Motor neuron (in vitro differentiated cells): ENCODE measurements at regions of chr1 and their contacts with region 1.

Region 1: GRCh38 chr1:246002725-246003441 is 504.2 kb downstream of the SMYD3 start:
- ATAC-seq: peak; percentile 62 to 94 (median 90)
- H3K4me3 ChIP-seq: no peak overlapping the region
- H3K27ac ChIP-seq: no peak overlapping the region
- H3K4me1 ChIP-seq: peaks cover 0 to 2% of the 10 kb centered on the region in 2 donors

Region 2: GRCh38 chr1:245156081-245156735 is 846.7 kb before region 1 on chr1:
- in situ Hi-C with region 1: loop called (anchors 5 to 25 kb)
- ATAC-seq: peak; percentile 65 to 88 (median 70)
- H3K4me3 ChIP-seq: peak overlapping the region; percentile 60 to 75 (median 68)
- H3K27ac ChIP-seq: peak overlapping the region; percentile 42 to 69
- H3K4me1 ChIP-seq: peaks cover 0 to 5% of the 10 kb centered on the region in 2 donors

Region 3: GRCh38 chr1:245528258-245528635 is 474.6 kb before region 1 on chr1:
- in situ Hi-C with region 1: no loop called
- ATAC-seq: no peak
- H3K4me3 ChIP-seq: no peak overlapping the region
- H3K27ac ChIP-seq: no peak overlapping the region
- H3K4me1 ChIP-seq: peaks cover 11 to 19% of the 10 kb centered on the region in 2 donors

Region 4: DNA sequence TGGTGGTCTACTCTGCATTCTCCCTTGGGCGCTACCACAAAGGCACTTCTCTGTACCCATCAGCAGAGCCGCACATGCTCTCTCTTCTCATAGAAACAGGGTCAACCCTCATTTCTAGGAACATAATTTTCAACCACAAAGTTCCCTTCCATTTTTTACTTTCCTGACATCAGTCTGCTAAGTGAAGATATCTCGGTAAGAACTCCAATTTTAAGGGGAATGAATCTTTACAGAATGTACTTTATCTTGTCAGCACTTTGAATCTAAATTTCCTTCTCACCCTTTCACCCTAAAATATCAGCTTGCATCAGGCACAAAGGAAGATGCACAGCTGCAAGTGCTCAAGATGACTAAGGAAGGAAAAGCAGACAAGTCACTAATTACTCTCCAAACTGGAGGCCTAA is 41.7 kb before region 1 on chr1:
- in situ Hi-C with region 1: no loop called
- ATAC-seq: no peak
- H3K4me3 ChIP-seq: no peak overlapping the region
- H3K27ac ChIP-seq: no peak overlapping the region
- H3K4me1 ChIP-seq: peaks cover 6 to 7% of the 10 kb centered on the region in 2 donors

Region 5: DNA sequence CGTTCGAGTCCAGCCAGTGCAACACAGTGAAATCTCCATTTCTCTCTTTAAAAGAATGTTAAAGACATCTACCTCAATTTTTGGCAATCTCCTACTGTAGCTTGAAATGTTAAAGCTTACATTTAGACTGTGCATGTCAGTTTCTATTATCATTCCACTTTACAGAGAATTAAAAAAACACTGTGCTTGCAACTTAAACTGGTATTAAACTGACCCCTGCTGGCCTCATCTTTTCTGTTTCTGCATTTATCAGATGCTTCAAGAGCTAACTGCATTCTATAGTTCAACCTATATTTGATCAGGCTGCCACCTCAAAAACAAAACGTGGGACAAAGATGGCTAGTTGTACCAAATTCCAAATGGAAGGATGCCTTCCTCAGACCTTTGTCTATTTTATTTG is 277.7 kb after region 1 on chr1:
- in situ Hi-C with region 1: loop called in 3 of 9 experiments (anchors 25 kb)
- ATAC-seq: peak in 7 of 8 experiments; percentile 22 to 63 (median 47)
- H3K4me3 ChIP-seq: no peak overlapping the region
- H3K27ac ChIP-seq: no peak overlapping the region
- H3K4me1 ChIP-seq: peaks cover 6 to 11% of the 10 kb centered on the region in 2 donors

Region 6: GRCh38 chr1:246428542-246429308 is 425.8 kb after region 1 on chr1:
- in situ Hi-C with region 1: loop called in 2 of 9 experiments (anchors 25 kb)
- ATAC-seq: peak in 2 of 8 experiments; percentile 31 to 86
- H3K4me3 ChIP-seq: no peak overlapping the region
- H3K27ac ChIP-seq: no peak overlapping the region
- H3K4me1 ChIP-seq: no peaks in the 10 kb centered on the region

Region 7: GRCh38 chr1:246450611-246451251 is 447.8 kb after region 1 on chr1:
- in situ Hi-C with region 1: loop called in 6 of 9 experiments (anchors 25 kb)
- ATAC-seq: peak in 5 of 8 experiments; percentile 21 to 68 (median 44)
- H3K4me3 ChIP-seq: no peak overlapping the region
- H3K27ac ChIP-seq: no peak overlapping the region
- H3K4me1 ChIP-seq: peaks cover 5 to 15% of the 10 kb centered on the region in 2 donors

Region 8: DNA sequence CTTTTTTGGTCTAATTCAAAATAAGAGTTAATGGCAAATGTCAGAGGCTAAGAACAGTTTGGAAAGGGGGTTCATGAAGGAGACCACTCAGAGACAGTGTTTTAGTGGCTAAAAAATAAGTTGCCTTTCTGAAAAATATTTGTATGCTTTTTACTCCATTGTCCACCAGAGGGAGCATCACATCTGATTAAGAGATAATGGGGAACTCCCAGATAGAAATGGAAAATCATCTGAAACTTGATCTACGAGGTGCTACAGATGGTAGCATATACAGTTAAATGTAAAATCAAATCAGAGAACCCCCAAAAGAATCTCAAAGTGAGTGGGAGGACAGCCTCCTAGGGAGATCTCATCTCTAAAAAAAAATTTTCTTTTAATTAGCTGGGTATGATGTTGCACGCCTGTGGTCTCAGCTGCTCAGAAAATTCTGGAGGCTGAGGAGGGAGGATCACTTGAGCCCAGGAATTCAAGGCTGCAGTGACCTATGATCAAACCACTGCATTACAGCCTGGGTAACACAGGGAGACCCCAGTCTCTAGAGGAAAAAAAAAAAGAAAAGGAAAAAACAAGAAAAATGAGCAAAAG is 494.5 kb after region 1 on chr1:
- in situ Hi-C with region 1: loop called in 1 of 9 experiments (anchors 25 kb)
- ATAC-seq: peak in 3 of 8 experiments; percentile 21 to 46 (median 46)
- H3K4me3 ChIP-seq: no peak overlapping the region
- H3K27ac ChIP-seq: no peak overlapping the region
- H3K4me1 ChIP-seq: peaks cover 1 to 3% of the 10 kb centered on the region in 2 donors